AG04449 (cell line): ENCODE measurements at regions of chr7 and their contacts with region 1.

Region 1: DNA sequence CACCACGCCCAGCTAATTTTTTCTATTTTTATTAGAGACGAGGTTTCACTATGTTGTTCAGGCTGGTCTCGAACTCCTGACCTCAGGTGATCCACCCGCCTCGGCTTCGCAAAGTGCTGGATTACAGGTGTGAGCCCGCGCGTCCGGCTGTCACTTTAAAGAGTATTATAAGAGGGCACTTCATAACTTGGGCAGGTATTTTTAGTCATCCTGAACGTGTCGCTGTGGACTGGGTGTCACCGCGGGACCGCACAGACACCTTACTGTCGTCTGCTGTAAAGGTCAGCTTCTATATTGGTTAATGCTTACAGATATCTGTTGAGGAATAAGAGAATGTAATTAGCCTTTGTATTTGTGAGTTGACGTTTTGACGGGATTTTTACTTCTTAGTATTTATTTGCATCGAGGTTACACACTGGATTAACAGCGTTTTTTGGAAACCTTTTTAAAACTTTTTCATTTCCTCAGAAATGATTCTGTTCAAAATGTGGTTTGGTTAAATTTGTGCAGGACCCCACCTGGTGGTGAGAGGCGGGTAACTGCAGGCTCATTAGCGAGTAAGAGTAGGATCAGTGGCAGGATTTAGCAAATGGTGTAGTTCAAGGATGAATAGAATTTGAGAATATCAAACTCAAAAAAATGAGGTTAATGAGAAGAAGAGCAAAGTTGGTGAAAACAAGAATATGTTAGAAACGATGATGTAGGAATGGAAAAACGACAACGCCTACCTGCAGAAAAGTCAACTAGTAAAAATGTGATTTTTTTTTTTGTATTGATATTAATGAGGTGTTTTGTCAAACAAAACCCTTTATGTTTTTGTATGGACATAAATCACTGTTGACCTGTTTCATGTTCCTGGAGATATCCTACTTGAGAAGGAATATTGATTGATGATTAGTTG is 3.2 kb downstream of the DNAJB6 start:
- DNase-seq: no peak
- H3K4me3 ChIP-seq: peak overlapping the region; percentile 12; the same call in 1 of the 2 replicates
- CTCF ChIP-seq: peak; percentile 76

Region 2: GRCh38 chr7:157150882-157151281 is 189.1 kb before region 1 on chr7:
- CTCF ChIA-PET with region 1: no interaction called
- POLR2A ChIA-PET with region 1: no interaction called
- DNase-seq: no peak
- H3K4me3 ChIP-seq: no peak overlapping the region
- CTCF ChIP-seq: no peak

Region 3: GRCh38 chr7:157306846-157307838 is 32.9 kb before region 1 on chr7:
- CTCF ChIA-PET with region 1: interaction called, 14 read pairs
- POLR2A ChIA-PET with region 1: no interaction called
- DNase-seq: no peak
- H3K4me3 ChIP-seq: no peak overlapping the region
- CTCF ChIP-seq: no peak

Region 4: GRCh38 chr7:157352516-157352915 is 12.5 kb after region 1 on chr7:
- CTCF ChIA-PET with region 1: interaction called, 22 read pairs
- POLR2A ChIA-PET with region 1: interaction called, 4 read pairs
- DNase-seq: no peak
- H3K4me3 ChIP-seq: no peak overlapping the region
- CTCF ChIP-seq: no peak